Sigmoid colon (tissue), 7 donors: ENCODE measurements at regions of chr7 and their contacts with region 1.

Region 1: DNA sequence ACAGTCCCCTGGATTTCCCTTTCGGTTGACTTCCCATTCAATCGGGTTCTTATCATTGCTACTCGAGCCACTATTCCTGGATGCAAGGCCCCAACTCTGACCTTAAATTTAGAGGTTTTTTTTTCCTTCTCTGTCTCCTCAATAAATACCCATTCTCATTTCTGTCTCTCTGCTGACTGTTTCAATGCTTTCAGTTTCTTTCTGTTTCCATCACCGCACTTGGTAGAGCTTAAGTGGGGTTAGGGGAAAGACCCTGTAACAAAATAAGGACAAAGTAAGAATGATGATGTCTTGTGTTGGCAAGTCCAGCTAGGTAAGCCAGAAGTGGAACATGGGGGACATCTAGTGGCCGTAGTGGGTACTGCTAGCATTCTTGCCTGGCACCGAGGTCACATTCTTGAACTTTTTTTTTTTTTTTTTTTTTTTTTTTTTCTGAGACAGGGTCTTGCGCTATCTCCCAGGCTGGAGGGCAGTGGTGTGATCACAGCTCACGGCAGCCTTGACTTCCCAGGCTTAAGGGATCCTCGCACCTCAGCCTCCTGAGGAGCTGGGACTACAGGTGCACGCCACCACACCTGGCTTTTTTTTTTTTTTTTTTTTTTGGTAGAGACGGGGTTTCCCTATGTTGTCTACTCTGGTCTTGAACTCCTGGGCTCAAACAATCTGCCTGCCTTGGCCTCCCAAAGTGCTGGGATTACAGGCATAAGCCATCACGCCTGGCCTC is 40.3 kb downstream of the ZC3HC1 start:
- DNase-seq: peak; percentile 86
- H3K4me3 ChIP-seq: no peak overlapping the region
- H3K27ac ChIP-seq: peak overlapping the region in 2 of 4 donors; percentile 3 to 39
- H3K4me1 ChIP-seq: no peaks in the 10 kb centered on the region
- H3K27me3 ChIP-seq: no peaks in the 10 kb centered on the region
- CTCF ChIP-seq: peak; percentile 72 to 92 (median 90)
- EP300 ChIP-seq: no peak
- POLR2A ChIP-seq: no peak

Region 2: DNA sequence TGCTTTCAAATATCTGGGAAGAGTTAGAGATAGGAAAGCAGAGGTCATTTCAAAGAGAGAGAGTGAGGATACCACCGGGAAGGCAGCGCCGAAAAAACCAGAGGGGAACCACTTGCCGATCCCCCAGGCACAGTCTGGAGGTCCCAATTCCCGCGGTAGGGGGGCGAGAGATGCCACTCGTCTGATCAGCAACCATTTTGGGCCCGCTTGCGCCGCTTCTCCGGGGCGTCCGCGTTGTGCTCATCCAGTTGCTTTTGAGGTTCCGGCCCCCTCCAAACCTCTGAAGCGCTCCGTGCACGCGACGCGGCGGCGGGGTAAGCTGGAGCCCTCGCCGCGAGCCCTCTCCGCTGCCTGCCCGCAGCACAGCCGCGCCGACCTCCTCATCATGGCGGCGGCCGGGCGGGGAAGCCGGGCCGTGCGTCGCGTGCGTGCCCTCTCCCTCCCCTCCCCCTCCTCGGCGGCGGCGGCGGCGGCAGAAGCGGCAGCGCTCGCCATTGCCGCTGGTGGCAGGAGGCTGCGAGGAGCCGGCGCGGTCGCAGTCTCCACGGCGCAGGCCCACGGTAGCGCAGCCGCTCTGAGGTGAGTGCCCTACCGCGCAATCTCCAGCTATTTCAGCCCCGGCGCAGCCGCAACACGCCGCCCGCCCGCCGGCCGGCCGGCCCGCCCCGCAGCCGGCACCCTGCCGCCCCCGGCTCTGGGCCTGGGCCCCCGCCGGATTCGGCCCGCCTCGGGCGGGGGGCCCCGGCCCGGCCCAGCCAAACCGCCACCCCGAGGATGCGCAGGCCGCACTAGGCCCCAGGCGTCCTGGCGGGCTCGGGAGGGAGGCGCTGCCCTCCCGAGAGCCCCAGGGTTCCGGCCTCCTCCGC is 399.4 kb before region 1 on chr7 and contains the start of gene NRF1:
- intact Hi-C with region 1: loop called (anchors 10 kb)
- DNase-seq: peak; percentile 92
- H3K4me3 ChIP-seq: peak within 1 kb of the TSS; percentile 73 to 83 (median 74)
- H3K27ac ChIP-seq: peak within 1 kb of the TSS; percentile 93 to 96 (median 94)
- H3K4me1 ChIP-seq: peaks cover 0 to 50% (median 34%) of the 10 kb centered on the region in 4 donors
- H3K27me3 ChIP-seq: no peaks in the 10 kb centered on the region
- CTCF ChIP-seq: no peak
- EP300 ChIP-seq: no peak
- POLR2A ChIP-seq: no peak
- total RNA-seq, gene NRF1: 15.0 to 18.1 (median 17.2) TPM

Region 3: DNA sequence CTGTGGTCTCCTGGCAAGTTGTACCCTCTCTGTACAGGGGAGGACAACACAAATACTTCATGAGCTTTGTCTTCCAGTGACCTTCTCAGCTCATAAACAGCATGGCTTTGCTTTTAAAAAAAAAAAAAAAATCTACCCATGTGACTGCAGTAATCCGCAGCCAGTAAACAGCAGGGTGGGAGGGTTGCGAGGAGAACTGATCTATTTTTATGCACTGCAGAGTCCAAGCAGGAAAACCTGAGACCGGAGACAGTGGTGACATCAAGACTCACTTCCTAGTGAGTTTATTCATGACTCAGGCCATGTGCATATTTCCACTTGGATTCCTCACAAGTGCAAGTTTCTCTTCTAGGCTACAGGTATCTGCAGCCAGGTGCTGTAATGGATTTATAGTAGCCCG is 271.4 kb before region 1 on chr7:
- intact Hi-C with region 1: loop called (anchors 10 kb)
- DNase-seq: no peak
- H3K4me3 ChIP-seq: no peak overlapping the region
- H3K27ac ChIP-seq: no peak overlapping the region
- H3K4me1 ChIP-seq: peaks cover 0 to 17% (median 11%) of the 10 kb centered on the region in 4 donors
- H3K27me3 ChIP-seq: no peaks in the 10 kb centered on the region
- CTCF ChIP-seq: no peak
- EP300 ChIP-seq: no peak
- POLR2A ChIP-seq: no peak